Activated naive CD4-positive, alpha-beta T cell treated with anti-CD3 and anti-CD28 coated beads for 36 hours (primary cell): ENCODE measurements at regions of chr10 and their contacts with region 1.

Region 1: DNA sequence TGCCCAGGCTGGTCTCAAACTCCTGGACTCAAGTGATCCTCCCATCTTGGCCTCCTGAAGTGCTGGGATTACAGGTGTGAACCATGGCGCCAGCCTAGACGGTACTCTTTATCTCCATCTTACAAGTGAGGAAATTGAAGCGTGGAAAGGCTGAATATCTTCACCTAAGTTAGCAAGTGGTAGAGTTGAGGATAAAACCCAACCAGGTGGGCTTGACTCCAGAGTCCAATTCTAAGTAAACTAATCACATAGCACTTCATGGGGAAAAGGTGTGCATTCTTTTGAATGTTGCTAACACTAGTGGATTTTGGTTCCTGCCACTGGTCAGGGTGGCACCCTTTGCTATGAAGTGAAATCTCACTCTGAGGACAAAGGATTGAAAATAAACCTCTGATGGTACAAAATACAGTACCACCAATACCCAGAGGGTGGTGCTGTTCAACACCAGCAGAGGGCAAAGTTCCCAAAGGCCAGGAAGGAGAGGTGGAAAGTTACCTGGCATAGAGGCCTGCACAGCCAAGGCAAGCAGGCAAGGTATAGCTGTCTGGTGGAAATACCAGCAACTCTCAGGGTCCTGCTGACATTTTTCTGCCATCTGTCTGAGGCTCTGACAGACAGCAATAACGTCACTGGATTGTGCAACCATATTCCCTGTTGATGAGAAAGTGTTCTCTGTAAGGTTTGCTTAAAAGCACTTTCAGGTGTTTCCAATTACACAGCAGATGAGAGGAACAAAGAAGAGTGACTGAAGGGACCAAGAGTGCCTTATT is 17.6 kb downstream of the ZDHHC16 start:
- DNase-seq: peak; percentile 49
- H3K4me3 Mint-ChIP-seq: no peak overlapping the region
- H3K27ac Mint-ChIP-seq: peak overlapping the region; percentile 50
- H3K4me1 Mint-ChIP-seq: no peaks in the 10 kb centered on the region
- H3K27me3 Mint-ChIP-seq: no peaks in the 10 kb centered on the region

Region 2: GRCh38 chr10:97037365-97038361 is 425.9 kb before region 1 on chr10:
- CTCF ChIA-PET with region 1: no interaction called
- intact Hi-C with region 1: no loop called
- DNase-seq: peak; percentile 86
- H3K4me3 Mint-ChIP-seq: peak overlapping the region; percentile 48
- H3K27ac Mint-ChIP-seq: no peak overlapping the region
- H3K4me1 Mint-ChIP-seq: peaks cover 10% of the 10 kb centered on the region
- H3K27me3 Mint-ChIP-seq: no peaks in the 10 kb centered on the region

Region 3: DNA sequence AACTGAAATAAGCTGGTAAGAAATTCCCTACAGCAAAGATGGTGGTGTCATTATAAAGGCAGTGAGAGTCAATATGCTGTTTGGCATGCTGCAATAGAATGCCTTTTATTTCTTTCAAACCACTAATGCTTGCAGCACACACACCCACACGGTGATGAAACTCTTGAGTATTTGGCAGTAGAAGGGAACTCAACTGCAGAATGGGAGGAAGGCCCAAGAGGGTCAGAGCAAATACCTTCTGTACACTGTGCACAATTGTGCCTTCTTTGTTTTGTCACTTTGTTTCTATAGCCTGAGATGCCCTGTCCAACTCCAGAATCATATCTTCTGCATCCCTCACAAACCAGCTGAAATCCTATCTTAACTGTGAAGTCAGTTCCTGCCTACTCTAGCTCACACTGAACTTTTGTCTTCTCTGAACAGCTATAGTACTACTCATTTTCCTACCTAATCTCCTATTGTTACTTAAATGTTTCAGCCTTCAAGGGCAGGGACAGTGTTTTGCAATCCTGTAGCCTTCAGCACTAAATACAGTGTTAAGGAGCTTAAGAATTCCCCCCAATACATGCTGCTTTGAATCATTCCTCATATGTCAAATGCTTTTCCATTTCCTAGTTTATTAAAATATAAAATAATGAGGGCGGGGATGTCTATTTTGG is 12.5 kb after region 1 on chr10:
- CTCF ChIA-PET with region 1: interaction called, 10 read pairs
- intact Hi-C with region 1: no loop called
- DNase-seq: no peak
- H3K4me3 Mint-ChIP-seq: no peak overlapping the region
- H3K27ac Mint-ChIP-seq: no peak overlapping the region
- H3K4me1 Mint-ChIP-seq: no peaks in the 10 kb centered on the region
- H3K27me3 Mint-ChIP-seq: no peaks in the 10 kb centered on the region

Region 4: GRCh38 chr10:97596101-97597062 is 132.8 kb after region 1 on chr10:
- CTCF ChIA-PET with region 1: no interaction called
- intact Hi-C with region 1: no loop called
- DNase-seq: no peak
- H3K4me3 Mint-ChIP-seq: no peak overlapping the region
- H3K27ac Mint-ChIP-seq: no peak overlapping the region
- H3K4me1 Mint-ChIP-seq: no peaks in the 10 kb centered on the region
- H3K27me3 Mint-ChIP-seq: no peaks in the 10 kb centered on the region